ENCODE measurements at regions of chr17 and their contacts with region 1.

Region 1: GRCh38 chr17:71628306-71628705 is 492.5 kb upstream of the SOX9 start:
- DNase-seq: no peak
- H3K4me3 ChIP-seq: no peak overlapping the region
- H3K27ac ChIP-seq: no peak overlapping the region
- H3K4me1 ChIP-seq: peaks cover under 1 to 18% (median 11%) of the 10 kb centered on the region in 4 donors
- H3K27me3 ChIP-seq: no peaks in the 10 kb centered on the region
- CTCF ChIP-seq: no peak
- EP300 ChIP-seq: no peak
- POLR2A ChIP-seq: no peak

Region 2: DNA sequence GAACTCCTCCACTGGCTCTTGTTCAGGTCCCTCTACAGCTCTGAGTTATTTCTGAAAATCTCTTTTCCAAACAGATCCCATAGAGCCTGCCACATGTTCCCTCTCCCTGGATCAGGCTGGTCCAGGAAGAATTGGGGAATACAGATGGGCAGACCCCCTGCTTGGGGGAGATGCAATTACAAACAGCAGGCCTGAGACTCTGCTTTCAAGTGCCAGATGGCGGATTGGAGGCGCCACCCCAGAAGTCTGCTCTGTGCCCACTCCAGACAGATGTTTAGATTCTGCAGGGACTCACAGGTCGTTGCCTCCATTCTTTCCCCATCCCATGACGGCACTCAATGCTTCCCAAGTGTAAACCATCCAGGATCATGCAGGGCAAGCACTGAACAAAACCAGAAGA is 1147.6 kb after region 1 on chr17:
- in situ Hi-C with region 1: no loop called
- intact Hi-C with region 1: loop called (anchors 5 kb)
- DNase-seq: no peak
- H3K4me3 ChIP-seq: no peak overlapping the region
- H3K27ac ChIP-seq: no peak overlapping the region
- H3K4me1 ChIP-seq: no peaks in the 10 kb centered on the region
- H3K27me3 ChIP-seq: no peaks in the 10 kb centered on the region
- CTCF ChIP-seq: no peak
- EP300 ChIP-seq: no peak
- POLR2A ChIP-seq: no peak